ENCODE measurements at regions of chr1 and their contacts with region 1.

Region 1: DNA sequence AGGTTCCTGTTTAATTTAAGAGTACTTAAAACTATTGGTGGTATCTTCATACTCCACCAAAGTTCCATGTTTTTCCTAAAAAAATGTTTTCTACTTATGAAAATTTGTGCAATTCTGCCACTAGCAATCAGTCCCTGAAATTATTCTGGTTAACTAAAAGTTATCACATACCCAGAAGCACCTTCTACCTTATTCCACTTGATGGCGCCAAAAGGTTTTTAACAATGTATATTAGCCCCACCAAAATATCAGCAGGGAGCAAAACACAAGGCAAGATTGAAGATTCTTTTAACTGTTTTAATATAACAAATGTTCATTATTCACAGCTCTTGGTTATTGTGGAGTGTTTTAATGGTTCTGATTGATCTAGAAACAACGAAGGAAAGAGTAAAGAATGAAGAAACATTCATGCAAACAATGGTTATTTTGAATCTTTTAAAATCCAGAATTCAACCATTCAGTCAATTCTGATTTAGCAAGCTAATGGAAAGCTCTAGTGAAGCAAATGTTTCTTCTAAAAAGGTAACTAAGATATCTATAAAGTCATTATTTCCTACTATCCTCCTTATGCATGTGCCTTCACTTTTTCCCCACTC is 67.2 kb downstream of the TTLL7 start:
- DNase-seq: peak; percentile 54
- ATAC-seq: peak; percentile 41
- H3K4me3 ChIP-seq: no peak overlapping the region
- H3K4me3 Mint-ChIP-seq: no peak overlapping the region
- H3K27ac ChIP-seq: no peak overlapping the region
- H3K27ac Mint-ChIP-seq: no peak overlapping the region
- H3K4me1 ChIP-seq: no peaks in the 10 kb centered on the region
- H3K4me1 Mint-ChIP-seq: no peaks in the 10 kb centered on the region
- H3K27me3 ChIP-seq: no peaks in the 10 kb centered on the region
- H3K27me3 Mint-ChIP-seq: no peaks in the 10 kb centered on the region
- CTCF ChIP-seq: peak; percentile 81

Region 2: GRCh38 chr1:83619170-83619896 is 312.4 kb before region 1 on chr1:
- CTCF ChIA-PET with region 1: no interaction called
- POLR2A ChIA-PET with region 1: no interaction called
- intact Hi-C with region 1: no loop called
- DNase-seq: no peak
- ATAC-seq: no peak
- H3K4me3 ChIP-seq: no peak overlapping the region
- H3K4me3 Mint-ChIP-seq: no peak overlapping the region
- H3K27ac ChIP-seq: no peak overlapping the region
- H3K27ac Mint-ChIP-seq: no peak overlapping the region
- H3K4me1 ChIP-seq: no peaks in the 10 kb centered on the region
- H3K4me1 Mint-ChIP-seq: no peaks in the 10 kb centered on the region
- H3K27me3 ChIP-seq: no peaks in the 10 kb centered on the region
- H3K27me3 Mint-ChIP-seq: no peaks in the 10 kb centered on the region
- CTCF ChIP-seq: no peak

Region 3: GRCh38 chr1:83918688-83919285 is 13.0 kb before region 1 on chr1:
- CTCF ChIA-PET with region 1: interaction called, 12 read pairs
- POLR2A ChIA-PET with region 1: no interaction called
- intact Hi-C with region 1: no loop called
- DNase-seq: no peak
- ATAC-seq: no peak
- H3K4me3 ChIP-seq: no peak overlapping the region
- H3K4me3 Mint-ChIP-seq: no peak overlapping the region
- H3K27ac ChIP-seq: no peak overlapping the region
- H3K27ac Mint-ChIP-seq: no peak overlapping the region
- H3K4me1 ChIP-seq: no peaks in the 10 kb centered on the region
- H3K4me1 Mint-ChIP-seq: no peaks in the 10 kb centered on the region
- H3K27me3 ChIP-seq: peaks cover 0 to under 1% (median 0%) of the 10 kb centered on the region in 4 experiments
- H3K27me3 Mint-ChIP-seq: peaks cover 11% of the 10 kb centered on the region
- CTCF ChIP-seq: no peak

Region 4: DNA sequence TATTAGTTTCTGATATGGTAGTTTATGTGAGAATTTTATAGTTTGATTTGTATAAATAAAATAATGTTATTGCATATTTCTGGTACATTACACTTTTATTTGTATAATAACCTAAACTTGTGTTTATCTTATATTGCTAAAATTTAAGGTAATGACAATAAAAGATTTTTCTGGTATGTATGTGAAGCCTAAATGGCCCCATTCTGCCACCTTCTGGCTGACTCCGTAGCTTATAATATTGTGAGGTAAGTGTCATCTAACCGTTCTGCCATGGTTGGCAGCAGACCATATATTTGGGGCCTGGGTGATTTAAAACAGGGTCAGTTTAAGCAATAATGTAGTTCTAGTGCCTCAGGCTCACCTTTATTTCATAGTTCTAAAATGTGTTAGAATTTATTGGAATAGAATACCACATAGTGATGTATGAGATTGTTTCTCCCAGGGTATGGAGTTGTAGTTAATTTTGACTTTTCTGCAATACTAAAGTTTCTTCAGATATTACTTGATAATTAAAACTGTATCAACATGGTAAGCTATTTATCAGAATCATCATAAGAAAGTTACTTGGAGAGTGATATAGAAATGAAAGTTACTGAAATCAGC is 191.1 kb after region 1 on chr1:
- CTCF ChIA-PET with region 1: interaction called, 93 read pairs
- POLR2A ChIA-PET with region 1: no interaction called
- intact Hi-C with region 1: loop called (anchors 1 kb)
- DNase-seq: peak; percentile 53
- ATAC-seq: no peak
- H3K4me3 ChIP-seq: no peak overlapping the region
- H3K4me3 Mint-ChIP-seq: no peak overlapping the region
- H3K27ac ChIP-seq: no peak overlapping the region
- H3K27ac Mint-ChIP-seq: no peak overlapping the region
- H3K4me1 ChIP-seq: no peaks in the 10 kb centered on the region
- H3K4me1 Mint-ChIP-seq: peaks cover 1% of the 10 kb centered on the region
- H3K27me3 ChIP-seq: no peaks in the 10 kb centered on the region
- H3K27me3 Mint-ChIP-seq: no peaks in the 10 kb centered on the region
- CTCF ChIP-seq: peak; percentile 78

Region 5: GRCh38 chr1:84753516-84754385 is 822.0 kb after region 1 on chr1:
- CTCF ChIA-PET with region 1: interaction called, 10 read pairs
- POLR2A ChIA-PET with region 1: no interaction called
- intact Hi-C with region 1: loop called (anchors 1 kb)
- DNase-seq: peak; percentile 76
- ATAC-seq: peak; percentile 81
- H3K4me3 ChIP-seq: no peak overlapping the region
- H3K4me3 Mint-ChIP-seq: no peak overlapping the region
- H3K27ac ChIP-seq: no peak overlapping the region
- H3K27ac Mint-ChIP-seq: no peak overlapping the region
- H3K4me1 ChIP-seq: peaks cover 1 to 3% of the 10 kb centered on the region in 2 donors
- H3K4me1 Mint-ChIP-seq: peaks cover 3% of the 10 kb centered on the region
- H3K27me3 ChIP-seq: peaks cover 0 to 16% (median 5%) of the 10 kb centered on the region in 4 experiments
- H3K27me3 Mint-ChIP-seq: peaks cover 30% of the 10 kb centered on the region
- CTCF ChIP-seq: peak; percentile 95

Region 6: DNA sequence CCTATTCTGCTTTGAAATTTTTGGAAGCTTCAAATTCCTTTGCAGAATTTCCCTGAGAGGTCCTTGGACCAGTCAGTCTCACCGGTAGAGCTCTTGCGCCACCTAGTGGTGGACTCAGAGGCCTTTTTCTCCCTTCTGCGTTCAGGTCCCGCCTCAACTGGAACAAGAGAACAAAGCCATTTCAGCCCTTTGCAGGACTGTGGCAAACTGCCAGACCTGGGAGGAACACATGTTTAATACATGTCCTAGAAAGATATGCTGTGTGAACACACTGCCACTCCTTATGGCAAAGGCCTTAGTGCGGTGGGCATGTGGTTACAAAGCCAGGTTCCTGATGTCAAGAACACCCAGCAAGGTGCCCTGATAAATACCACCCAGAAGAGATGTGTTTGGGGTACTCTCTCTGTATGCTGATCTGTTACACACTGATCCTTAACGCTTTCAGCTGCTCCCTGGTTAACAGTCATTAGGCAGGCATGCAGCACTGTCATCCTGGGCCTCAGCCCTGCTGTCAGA is 840.7 kb after region 1 on chr1:
- CTCF ChIA-PET with region 1: interaction called, 10 read pairs
- POLR2A ChIA-PET with region 1: no interaction called
- intact Hi-C with region 1: loop called (anchors 1 kb)
- DNase-seq: peak; percentile 73
- ATAC-seq: peak; percentile 56
- H3K4me3 ChIP-seq: no peak overlapping the region
- H3K4me3 Mint-ChIP-seq: no peak overlapping the region
- H3K27ac ChIP-seq: no peak overlapping the region
- H3K27ac Mint-ChIP-seq: no peak overlapping the region
- H3K4me1 ChIP-seq: no peaks in the 10 kb centered on the region
- H3K4me1 Mint-ChIP-seq: no peaks in the 10 kb centered on the region
- H3K27me3 ChIP-seq: peaks cover 0 to 7% (median 3%) of the 10 kb centered on the region in 4 experiments
- H3K27me3 Mint-ChIP-seq: peaks cover 18% of the 10 kb centered on the region
- CTCF ChIP-seq: peak; percentile 94

Region 7: DNA sequence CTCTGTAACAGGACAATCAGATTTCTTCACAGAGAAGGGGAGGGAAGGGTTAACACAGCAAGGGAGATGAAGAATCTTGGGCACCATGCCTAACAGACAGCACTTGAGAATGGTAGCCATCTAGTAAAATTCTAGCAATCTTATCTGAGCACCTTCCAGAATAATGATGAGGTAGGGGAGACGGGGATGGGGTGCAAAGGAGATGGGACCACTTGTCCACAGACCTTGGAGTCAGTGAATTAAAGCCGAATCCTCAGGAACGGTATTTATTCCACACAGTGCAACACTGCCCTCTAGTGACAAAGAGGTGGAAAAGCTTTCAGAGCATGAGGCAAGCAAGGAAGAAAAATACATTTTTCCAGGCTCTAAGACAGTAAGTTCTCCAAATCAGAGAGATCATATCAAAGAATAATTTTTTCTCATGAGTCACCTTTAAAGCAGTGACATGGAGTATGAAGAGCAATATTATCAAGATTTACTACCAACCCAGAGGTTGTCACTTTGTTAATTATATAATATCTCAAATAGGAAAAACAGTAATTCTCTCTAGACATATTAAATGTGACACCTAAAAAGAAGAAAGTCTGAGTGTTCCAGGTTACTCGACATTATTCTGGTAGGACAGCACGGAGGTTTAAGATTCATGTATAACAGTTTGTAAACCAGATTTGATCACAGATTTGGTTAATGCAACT is 1004.5 kb after region 1 on chr1:
- CTCF ChIA-PET with region 1: interaction called, 4 read pairs
- POLR2A ChIA-PET with region 1: no interaction called
- intact Hi-C with region 1: loop called (anchors 10 kb)
- DNase-seq: peak; percentile 68
- ATAC-seq: peak; percentile 62
- H3K4me3 ChIP-seq: no peak overlapping the region
- H3K4me3 Mint-ChIP-seq: no peak overlapping the region
- H3K27ac ChIP-seq: no peak overlapping the region
- H3K27ac Mint-ChIP-seq: no peak overlapping the region
- H3K4me1 ChIP-seq: peaks cover 0 to 3% of the 10 kb centered on the region in 2 donors
- H3K4me1 Mint-ChIP-seq: peaks cover 2% of the 10 kb centered on the region
- H3K27me3 ChIP-seq: no peaks in the 10 kb centered on the region
- H3K27me3 Mint-ChIP-seq: no peaks in the 10 kb centered on the region
- CTCF ChIP-seq: peak; percentile 98

Measured in B cell (primary cell).